ENCODE measurements at regions of chr5 and their contacts with region 1.

Region 1: DNA sequence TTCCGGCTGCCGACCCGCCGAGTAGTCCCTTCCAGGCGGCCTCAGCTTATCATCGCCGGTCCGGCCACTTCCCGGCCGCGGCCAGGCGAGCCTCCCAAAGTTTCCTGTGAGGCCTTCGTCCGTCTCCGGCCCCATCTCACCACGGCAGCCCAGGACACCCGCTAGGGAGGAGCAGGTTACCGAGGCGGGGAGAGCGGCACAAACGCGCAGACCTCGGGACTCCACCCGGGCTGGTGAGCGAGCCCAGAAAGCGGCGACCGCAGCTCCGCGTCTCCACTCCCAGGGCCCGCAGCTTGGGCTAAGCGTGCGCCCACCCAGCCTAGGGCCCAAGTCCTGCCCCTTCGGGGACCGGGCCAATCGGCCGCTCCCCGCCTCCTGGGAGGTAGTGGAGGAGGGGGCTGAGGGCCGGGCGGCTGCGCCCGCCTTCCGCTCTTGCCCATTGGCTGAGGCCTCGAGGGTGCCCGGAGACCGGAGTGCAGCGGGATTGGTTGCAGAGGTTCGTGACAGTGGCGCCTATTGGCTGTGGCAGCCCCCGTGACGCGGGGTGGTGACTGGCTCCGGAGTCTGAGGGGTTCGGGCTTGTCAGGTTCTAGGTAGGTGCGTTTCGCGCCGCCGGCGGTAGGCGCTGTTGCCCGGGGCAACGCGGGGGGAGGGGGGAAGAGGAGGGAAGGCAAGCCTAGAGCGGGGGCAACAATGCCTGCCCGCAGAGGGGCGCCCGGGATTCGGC is 867 bp downstream of the FER start:
- DNase-seq: peak; percentile 98
- ATAC-seq: peak; percentile 98
- H3K4me3 Mint-ChIP-seq: peak overlapping the region; percentile 75
- H3K27ac Mint-ChIP-seq: peak overlapping the region; percentile 89
- H3K4me1 Mint-ChIP-seq: peaks cover 18% of the 10 kb centered on the region
- H3K27me3 Mint-ChIP-seq: no peaks in the 10 kb centered on the region

Region 2: DNA sequence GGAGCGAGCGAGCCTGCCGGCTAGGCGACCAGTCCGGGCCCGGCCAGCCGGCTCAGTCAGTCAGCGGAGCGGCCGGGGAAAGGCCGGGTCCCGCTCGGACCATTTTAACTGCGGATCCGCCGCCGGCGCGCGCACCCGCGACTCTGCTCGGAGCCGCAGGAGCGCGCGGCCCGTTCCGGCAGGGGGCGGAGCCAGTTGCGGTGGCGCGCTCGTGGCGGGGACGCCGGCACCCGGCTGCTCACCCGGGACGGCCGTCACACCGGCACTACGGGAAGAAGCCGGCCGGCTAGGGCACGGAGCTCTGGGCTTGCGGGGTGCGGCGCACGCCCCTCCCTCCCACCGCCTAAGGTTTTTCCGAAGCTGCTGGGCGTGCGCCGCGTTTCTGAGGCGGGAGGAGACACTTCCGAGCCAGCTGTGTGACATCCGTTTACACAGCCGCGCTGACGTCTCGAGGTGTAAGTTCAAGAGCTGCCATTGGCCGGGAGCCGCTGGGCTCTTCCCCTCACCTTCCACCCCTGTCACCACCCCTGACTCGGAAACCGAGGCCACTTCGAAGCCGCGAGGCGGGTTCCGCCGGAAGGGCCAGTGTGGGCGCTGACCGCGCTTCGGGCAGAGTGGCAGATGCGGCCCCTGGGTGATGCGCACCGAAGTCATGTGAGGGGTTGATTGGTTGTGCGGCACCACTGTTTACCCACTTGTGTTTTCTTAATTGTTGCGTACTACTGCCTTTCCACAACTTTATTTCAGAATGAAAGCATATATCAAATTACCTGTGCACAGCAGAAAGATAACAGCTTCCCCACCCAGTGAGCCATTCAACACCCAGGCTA is 366.4 kb before region 1 on chr5 and contains the start of gene FBXL17:
- CTCF ChIA-PET with region 1: no interaction called
- POLR2A ChIA-PET with region 1: no interaction called
- intact Hi-C with region 1: loop called (anchors 1 to 5 kb)
- DNase-seq: peak; percentile 95
- ATAC-seq: peak; percentile 84
- H3K4me3 Mint-ChIP-seq: peak within 1 kb of the TSS; percentile 77
- H3K27ac Mint-ChIP-seq: peak within 1 kb of the TSS; percentile 97
- H3K4me1 Mint-ChIP-seq: peaks cover 33% of the 10 kb centered on the region
- H3K27me3 Mint-ChIP-seq: no peaks in the 10 kb centered on the region
- total RNA-seq, gene FBXL17: 3.1 to 6.6 TPM

Region 3: GRCh38 chr5:108642167-108642906 is 106.2 kb before region 1 on chr5:
- CTCF ChIA-PET with region 1: no interaction called
- POLR2A ChIA-PET with region 1: no interaction called
- intact Hi-C with region 1: no loop called
- DNase-seq: peak; percentile 71
- ATAC-seq: peak; percentile 98
- H3K4me3 Mint-ChIP-seq: no peak overlapping the region
- H3K27ac Mint-ChIP-seq: no peak overlapping the region
- H3K4me1 Mint-ChIP-seq: peaks cover 3% of the 10 kb centered on the region
- H3K27me3 Mint-ChIP-seq: peaks cover 3% of the 10 kb centered on the region

Region 4: DNA sequence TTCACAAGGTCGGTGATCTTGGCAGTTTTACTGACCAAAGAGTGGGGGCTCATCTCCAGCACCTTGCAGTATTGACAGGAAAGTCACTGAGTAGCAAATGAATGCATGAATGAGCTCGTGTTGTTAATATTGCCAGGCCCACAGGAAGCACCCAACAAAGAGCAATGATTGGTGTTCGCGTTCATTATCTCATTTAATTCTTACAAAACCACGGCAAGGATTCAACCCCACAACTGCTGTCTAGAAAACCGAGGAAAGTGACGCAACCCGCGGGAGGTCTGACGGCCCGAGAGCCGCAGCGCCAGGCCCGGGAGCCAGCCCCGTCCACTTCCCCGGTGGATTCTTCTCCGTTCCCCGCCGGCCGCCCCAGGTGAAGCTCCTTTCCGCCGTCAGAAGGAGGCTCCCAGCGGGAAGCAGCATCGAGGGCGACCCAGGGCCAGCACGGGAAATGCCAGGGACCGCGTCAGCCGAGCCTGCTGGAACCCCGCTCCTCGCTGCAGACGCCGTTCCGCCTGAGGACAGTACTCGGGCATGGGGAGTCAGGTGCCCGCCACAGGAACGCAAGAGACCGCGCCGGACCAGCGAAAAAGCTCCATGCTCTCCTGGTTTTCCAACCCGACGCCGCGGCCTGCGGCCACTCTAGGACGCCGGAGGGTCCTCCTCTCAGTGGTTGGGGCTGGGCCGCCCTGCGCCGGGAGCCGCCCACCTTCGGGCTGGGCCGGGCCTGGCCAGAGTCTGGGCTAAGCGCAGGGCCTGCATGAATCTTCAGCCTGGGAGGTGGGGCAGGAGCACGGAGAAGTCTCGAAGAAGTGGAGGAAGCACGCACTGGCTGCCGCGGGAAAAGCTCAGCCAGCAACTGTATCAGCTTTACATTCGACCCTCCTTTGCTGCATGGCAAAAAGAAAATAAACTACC is 20.7 kb before region 1 on chr5:
- CTCF ChIA-PET with region 1: no interaction called
- POLR2A ChIA-PET with region 1: no interaction called
- intact Hi-C with region 1: loop called (anchors 1 to 2 kb)
- DNase-seq: peak; percentile 54
- ATAC-seq: peak; percentile 77
- H3K4me3 Mint-ChIP-seq: peak overlapping the region; percentile 58
- H3K27ac Mint-ChIP-seq: peak overlapping the region; percentile 66
- H3K4me1 Mint-ChIP-seq: peaks cover 19% of the 10 kb centered on the region
- H3K27me3 Mint-ChIP-seq: peaks cover 32% of the 10 kb centered on the region

Region 5: GRCh38 chr5:108876451-108876850 is 127.9 kb after region 1 on chr5:
- CTCF ChIA-PET with region 1: no interaction called
- POLR2A ChIA-PET with region 1: no interaction called
- intact Hi-C with region 1: no loop called
- DNase-seq: no peak
- ATAC-seq: no peak
- H3K4me3 Mint-ChIP-seq: no peak overlapping the region
- H3K27ac Mint-ChIP-seq: no peak overlapping the region
- H3K4me1 Mint-ChIP-seq: no peaks in the 10 kb centered on the region
- H3K27me3 Mint-ChIP-seq: no peaks in the 10 kb centered on the region

Region 6: GRCh38 chr5:110054240-110054639 is 1305.7 kb after region 1 on chr5:
- CTCF ChIA-PET with region 1: no interaction called
- POLR2A ChIA-PET with region 1: no interaction called
- intact Hi-C with region 1: loop called in 1 of 2 experiments (anchors 5 kb)
- DNase-seq: peak; percentile 84
- ATAC-seq: peak; percentile 94
- H3K4me3 Mint-ChIP-seq: no peak overlapping the region
- H3K27ac Mint-ChIP-seq: peak overlapping the region; percentile 76
- H3K4me1 Mint-ChIP-seq: peaks cover 28% of the 10 kb centered on the region
- H3K27me3 Mint-ChIP-seq: no peaks in the 10 kb centered on the region